K562 (cell line): ENCODE measurements at regions of chr3 and their contacts with region 1.

Region 1: DNA sequence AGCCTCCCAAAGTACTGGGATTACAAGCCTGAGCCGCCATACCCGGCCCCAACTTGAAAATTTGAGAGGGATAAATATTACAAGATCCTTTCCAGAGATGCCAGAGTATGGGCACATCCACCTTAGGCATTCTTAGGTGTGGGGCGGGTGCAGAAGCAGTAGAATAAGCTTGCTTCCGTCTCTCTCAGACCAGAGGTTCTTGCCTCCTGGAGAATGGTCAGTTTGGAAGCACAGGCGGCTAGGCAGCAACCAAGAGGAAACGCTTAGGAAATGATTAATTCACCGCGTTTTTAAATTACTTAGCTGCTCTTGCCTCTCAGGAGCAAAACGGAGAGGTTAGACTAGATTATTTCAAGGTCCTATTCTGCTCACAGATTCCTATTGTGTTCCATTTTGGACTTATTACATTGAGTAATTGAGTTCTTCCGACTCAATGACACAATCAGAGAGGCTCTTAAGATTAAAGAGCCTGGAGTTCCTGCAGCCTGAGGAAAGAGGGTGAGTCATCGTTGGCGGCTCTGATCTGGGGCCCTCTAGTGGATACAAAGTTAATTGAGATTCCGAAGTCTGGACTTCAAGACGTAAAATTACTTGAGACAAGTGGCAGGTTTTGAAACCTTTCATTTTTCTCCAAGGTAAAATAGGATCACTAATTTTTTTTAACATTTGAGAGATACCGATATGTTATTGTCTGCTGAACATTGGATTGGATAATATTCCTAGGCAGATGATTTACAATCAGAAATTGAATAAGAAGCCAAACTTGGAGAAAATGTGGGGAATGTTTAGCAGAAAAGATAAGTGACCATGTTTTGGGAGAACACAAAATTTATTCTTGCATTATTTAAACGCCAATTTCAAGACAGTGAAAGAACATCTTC is 5.8 kb upstream of the TOPAZ1 start:
- DNase-seq: peak; percentile 80 to 93 (median 84)
- ATAC-seq: peak; percentile 89
- H3K4me3 ChIP-seq: no peak overlapping the region
- H3K27ac ChIP-seq: peak overlapping the region; percentile 86
- H3K4me1 ChIP-seq: peaks cover 10 to 47% of the 10 kb centered on the region in 2 experiments
- H3K27me3 ChIP-seq: no peaks in the 10 kb centered on the region
- CTCF ChIP-seq: peak; percentile 73 to 91 (median 89)
- EP300 ChIP-seq: peak; percentile 67
- POLR2A ChIP-seq: 0 out of 2 replicates have a peak, but pooled peaks have one; percentile 12
- RAD21 ChIP-seq: peak; percentile 60 to 66

Region 2: DNA sequence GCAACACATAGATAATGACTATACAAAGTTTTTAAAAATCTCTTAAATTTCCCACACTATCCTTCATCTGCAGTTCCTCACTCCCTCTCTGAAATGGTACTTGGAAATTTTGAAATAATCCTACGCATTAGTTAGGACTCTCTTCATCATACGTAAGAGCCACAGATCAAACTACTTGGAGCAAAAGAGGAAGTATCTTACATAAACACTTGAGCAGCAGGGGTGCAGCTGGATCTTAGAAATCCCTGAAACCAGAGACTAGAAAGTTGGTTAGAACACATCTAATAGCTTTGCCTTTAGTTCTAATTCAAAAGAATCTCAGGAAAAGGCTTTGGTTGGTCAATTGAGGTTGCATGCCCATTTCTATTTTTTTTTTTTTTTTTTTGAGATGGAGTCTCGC is 280.4 kb after region 1 on chr3:
- CTCF ChIA-PET with region 1: no interaction called
- POLR2A ChIA-PET with region 1: no interaction called
- in situ Hi-C with region 1: no loop called
- intact Hi-C with region 1: loop called (anchors 5 kb)
- DNase-seq: no peak
- ATAC-seq: no peak
- H3K4me3 ChIP-seq: no peak overlapping the region
- H3K27ac ChIP-seq: no peak overlapping the region
- H3K4me1 ChIP-seq: peaks cover 12 to 22% of the 10 kb centered on the region in 2 experiments
- H3K27me3 ChIP-seq: no peaks in the 10 kb centered on the region
- CTCF ChIP-seq: no peak
- EP300 ChIP-seq: no peak
- POLR2A ChIP-seq: no peak
- RAD21 ChIP-seq: no peak